CD8-positive, alpha-beta memory T cell (primary cell): ENCODE measurements at regions of chr18 and their contacts with region 1.

Region 1: DNA sequence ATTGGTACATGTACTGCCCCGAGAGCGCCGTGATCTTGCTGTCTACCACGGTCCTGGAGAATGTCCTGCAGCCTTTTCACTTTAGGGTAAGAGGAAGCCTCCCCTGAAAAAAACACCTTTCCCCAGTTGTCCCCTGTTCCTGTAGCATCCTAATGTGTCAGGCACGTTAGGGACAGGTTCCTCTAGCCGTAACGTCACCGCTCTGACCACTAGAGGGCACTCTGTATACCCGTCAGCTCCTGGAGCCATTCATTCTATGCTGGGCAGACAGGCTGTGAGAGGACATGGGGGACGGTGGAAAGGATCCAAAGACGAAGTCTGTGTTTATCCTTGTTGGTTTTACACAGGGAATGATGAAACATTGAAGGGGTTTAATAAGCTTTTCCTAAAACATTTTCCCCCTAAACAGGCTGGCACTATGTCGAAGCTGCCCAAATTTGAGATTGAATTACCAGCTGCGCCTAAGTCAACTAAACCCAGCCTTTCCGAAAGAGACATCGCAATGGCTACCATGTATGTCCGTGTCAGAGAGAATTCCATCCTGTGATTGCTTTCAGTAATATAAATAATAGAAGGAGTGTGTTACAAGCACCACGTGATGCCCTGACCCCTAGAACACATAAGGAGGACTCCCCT is 12.7 kb downstream of the RMC1 start:
- DNase-seq: peak; percentile 61 to 82 (median 67)
- H3K4me3 ChIP-seq: no peak overlapping the region
- H3K4me3 Mint-ChIP-seq: no peak overlapping the region
- H3K27ac ChIP-seq: peak overlapping the region; percentile 28
- H3K27ac Mint-ChIP-seq: peak overlapping the region; percentile 10 to 84 (median 65)
- H3K4me1 ChIP-seq: peaks cover 6% of the 10 kb centered on the region
- H3K4me1 Mint-ChIP-seq: peaks cover 10 to 24% (median 18%) of the 10 kb centered on the region in 3 donors
- H3K27me3 ChIP-seq: no peaks in the 10 kb centered on the region
- H3K27me3 Mint-ChIP-seq: peaks cover 0 to 1% of the 10 kb centered on the region in 2 donors

Region 2: DNA sequence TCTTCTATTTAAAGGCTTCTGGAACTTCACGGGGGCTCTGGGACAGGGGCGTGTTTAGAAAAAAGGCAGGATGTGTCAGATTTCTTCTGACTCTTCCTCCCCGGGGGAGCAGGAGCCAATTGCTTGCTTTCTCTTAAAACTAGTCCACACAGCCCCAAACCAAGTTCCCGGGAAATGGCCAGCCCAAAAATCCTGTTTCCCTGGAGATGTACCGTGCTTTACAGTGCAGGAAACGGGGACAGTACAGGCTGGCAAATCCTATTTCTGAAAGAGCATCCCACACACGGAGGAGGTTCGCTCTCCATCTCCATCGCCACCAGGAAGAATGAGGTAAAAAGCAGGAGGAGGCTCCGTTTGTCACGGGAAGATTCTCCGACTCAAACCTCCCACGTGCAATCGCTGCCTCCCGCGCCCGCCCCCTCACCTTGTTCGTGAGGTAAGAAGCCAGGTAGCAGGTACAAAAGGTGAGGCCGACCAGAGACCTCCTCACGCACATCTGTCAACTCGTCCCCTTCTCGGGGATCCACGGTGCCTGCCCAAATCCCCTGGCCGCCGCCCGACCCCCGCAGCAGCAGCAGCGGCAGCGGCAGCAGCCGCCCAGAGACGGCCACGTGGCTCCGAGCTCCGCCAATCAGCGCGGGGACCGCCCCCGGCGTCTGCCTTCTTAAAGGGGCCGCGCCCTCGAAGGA is 78.5 kb before region 1 on chr18:
- CTCF ChIA-PET with region 1: no interaction called
- POLR2A ChIA-PET with region 1: no interaction called
- DNase-seq: peak; percentile 68 to 81 (median 73)
- H3K4me3 ChIP-seq: peak overlapping the region; percentile 98
- H3K4me3 Mint-ChIP-seq: peak overlapping the region; percentile 85 to 92 (median 89)
- H3K27ac ChIP-seq: peak overlapping the region; percentile 51
- H3K27ac Mint-ChIP-seq: peak overlapping the region in 4 of 8 donors; percentile 68 to 80 (median 75)
- H3K4me1 ChIP-seq: peaks cover 8% of the 10 kb centered on the region
- H3K4me1 Mint-ChIP-seq: peaks cover 13 to 26% (median 21%) of the 10 kb centered on the region in 3 donors
- H3K27me3 ChIP-seq: no peaks in the 10 kb centered on the region
- H3K27me3 Mint-ChIP-seq: peaks cover 0 to 1% of the 10 kb centered on the region in 2 donors

Region 3: DNA sequence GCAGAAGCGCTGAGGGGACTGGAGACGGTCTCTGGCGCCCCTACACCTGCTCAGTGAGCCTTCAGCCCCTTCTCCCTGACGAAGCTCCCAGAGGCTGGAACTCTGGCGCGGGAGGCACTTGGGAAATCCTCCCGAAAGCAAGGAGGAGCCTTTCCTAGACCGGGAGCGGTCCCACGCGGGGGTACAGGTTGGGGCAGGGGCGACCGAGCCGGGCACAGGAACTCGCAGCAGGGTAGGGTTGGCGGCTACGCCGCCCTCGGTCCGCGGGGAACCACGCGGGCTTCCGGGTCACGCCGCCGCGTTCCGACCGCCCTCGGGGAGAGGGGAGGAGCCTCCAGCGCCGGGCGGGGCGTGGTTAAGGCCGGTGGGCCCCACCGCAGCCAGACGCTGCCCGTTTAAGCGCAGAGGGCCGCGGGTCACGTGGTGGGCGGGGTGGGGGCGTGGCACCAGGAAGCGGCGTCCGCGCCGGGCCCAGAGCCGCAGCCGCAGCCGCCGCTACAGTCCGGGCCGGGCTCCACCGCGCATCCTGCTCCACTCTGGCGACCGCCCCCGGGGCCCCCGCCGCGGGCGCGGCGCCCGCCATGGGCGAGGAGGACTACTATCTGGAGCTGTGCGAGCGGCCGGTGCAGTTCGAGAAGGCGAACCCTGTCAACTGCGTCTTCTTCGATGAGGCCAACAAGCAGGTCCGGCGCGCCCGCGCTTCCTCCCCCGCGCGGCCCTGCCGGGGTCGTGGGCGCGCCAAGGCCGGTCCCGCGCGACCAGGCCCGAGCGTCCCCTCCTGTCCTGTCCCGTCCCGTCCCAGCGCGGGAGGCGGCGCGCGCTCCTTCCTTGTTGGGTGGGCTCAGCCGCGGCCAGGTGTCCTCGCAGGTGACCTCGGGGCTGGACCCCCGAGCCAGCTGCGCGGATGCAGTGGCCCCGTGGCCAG is 12.7 kb before region 1 on chr18 and contains the start of gene RMC1:
- CTCF ChIA-PET with region 1: interaction called, 20 read pairs
- POLR2A ChIA-PET with region 1: no interaction called
- DNase-seq: peak; percentile 94 to 97 (median 97)
- H3K4me3 ChIP-seq: peak within 1 kb of the TSS; percentile 92
- H3K4me3 Mint-ChIP-seq: peak within 1 kb of the TSS; percentile 86 to 98 (median 97)
- H3K27ac ChIP-seq: peak within 1 kb of the TSS; percentile 85
- H3K27ac Mint-ChIP-seq: peak within 1 kb of the TSS; percentile 91 to 96 (median 94)
- H3K4me1 ChIP-seq: peaks cover 40% of the 10 kb centered on the region
- H3K4me1 Mint-ChIP-seq: peaks cover 53 to 66% (median 60%) of the 10 kb centered on the region in 3 donors
- H3K27me3 ChIP-seq: no peaks in the 10 kb centered on the region
- H3K27me3 Mint-ChIP-seq: no peaks in the 10 kb centered on the region
- total RNA-seq, gene RMC1: 45.5 to 47.7 TPM

Region 4: DNA sequence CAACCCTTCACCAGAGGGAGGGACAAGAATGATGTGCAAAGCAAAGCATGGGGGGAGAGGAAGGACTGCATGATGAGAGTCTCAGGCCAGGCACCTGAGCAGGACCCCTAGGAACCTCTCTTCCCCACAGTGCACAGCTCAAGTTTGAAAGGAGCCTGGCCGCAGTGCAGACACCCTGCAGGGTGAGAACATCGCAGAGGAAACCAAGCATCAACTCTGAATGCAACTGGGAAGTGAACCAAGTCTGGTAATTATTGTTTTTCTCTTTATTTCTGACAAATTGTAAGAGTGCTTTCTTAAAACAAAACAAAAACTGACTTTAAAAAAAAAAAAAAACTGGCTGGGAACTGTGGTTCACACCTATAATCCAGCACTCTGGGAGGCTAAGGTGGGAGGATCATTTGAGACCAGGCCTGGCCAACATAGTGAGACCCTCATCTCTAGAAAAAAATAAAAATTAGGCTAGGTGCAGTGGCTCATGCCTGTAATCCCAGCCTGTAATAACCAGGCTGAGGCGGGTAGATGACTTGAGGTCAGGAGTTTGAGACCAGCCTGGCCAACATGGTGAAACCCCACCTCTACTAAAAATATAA is 55.0 kb after region 1 on chr18:
- CTCF ChIA-PET with region 1: interaction called, 19 read pairs
- POLR2A ChIA-PET with region 1: no interaction called
- DNase-seq: peak in 2 of 5 donors; percentile 14 to 39
- H3K4me3 ChIP-seq: no peak overlapping the region
- H3K4me3 Mint-ChIP-seq: peak overlapping the region; percentile 14 to 81 (median 59)
- H3K27ac ChIP-seq: no peak overlapping the region
- H3K27ac Mint-ChIP-seq: peak overlapping the region; percentile 83 to 97 (median 89)
- H3K4me1 ChIP-seq: peaks cover 49% of the 10 kb centered on the region
- H3K4me1 Mint-ChIP-seq: peaks cover 52 to 69% (median 63%) of the 10 kb centered on the region in 3 donors
- H3K27me3 ChIP-seq: no peaks in the 10 kb centered on the region
- H3K27me3 Mint-ChIP-seq: no peaks in the 10 kb centered on the region

Region 5: DNA sequence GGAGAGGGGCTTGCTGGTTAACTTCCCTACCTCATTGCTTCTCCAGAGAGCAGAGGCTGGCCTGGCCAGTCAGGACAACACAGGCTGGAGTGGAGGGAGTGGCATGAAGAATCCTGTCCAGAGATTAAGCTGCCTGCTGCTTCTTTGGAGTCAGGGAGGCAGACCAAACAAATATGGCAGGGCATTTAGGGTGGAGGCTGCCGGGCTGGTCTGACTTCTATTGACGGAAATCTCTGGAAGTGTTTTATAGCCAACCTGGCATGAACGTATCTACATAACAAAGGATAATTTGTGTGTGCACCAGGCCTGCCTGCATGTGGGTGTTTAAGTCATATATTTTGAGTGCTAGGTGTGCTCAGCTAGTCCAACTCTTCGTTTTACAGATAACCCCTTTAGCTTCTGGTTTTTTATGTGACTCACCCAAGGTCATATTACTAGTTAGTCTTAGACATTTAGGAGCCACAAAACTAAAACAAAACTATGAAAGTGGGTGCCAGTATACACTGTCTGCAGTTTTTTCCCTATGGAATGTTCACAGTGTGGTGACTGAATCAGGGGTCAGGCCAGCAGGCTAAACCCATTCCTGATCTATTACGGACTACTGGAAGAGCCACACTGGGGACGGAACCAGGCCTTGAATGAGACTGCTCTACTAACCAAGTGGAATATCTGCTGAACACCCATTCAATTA is 64.8 kb after region 1 on chr18:
- CTCF ChIA-PET with region 1: interaction called, 50 read pairs
- POLR2A ChIA-PET with region 1: no interaction called
- DNase-seq: no peak
- H3K4me3 ChIP-seq: no peak overlapping the region
- H3K4me3 Mint-ChIP-seq: peak overlapping the region in 2 of 7 donors; percentile 61 to 67
- H3K27ac ChIP-seq: no peak overlapping the region
- H3K27ac Mint-ChIP-seq: peak overlapping the region in 5 of 8 donors; percentile 30 to 92 (median 84)
- H3K4me1 ChIP-seq: peaks cover 50% of the 10 kb centered on the region
- H3K4me1 Mint-ChIP-seq: peaks cover 69 to 83% (median 81%) of the 10 kb centered on the region in 3 donors
- H3K27me3 ChIP-seq: no peaks in the 10 kb centered on the region
- H3K27me3 Mint-ChIP-seq: no peaks in the 10 kb centered on the region

Region 6: DNA sequence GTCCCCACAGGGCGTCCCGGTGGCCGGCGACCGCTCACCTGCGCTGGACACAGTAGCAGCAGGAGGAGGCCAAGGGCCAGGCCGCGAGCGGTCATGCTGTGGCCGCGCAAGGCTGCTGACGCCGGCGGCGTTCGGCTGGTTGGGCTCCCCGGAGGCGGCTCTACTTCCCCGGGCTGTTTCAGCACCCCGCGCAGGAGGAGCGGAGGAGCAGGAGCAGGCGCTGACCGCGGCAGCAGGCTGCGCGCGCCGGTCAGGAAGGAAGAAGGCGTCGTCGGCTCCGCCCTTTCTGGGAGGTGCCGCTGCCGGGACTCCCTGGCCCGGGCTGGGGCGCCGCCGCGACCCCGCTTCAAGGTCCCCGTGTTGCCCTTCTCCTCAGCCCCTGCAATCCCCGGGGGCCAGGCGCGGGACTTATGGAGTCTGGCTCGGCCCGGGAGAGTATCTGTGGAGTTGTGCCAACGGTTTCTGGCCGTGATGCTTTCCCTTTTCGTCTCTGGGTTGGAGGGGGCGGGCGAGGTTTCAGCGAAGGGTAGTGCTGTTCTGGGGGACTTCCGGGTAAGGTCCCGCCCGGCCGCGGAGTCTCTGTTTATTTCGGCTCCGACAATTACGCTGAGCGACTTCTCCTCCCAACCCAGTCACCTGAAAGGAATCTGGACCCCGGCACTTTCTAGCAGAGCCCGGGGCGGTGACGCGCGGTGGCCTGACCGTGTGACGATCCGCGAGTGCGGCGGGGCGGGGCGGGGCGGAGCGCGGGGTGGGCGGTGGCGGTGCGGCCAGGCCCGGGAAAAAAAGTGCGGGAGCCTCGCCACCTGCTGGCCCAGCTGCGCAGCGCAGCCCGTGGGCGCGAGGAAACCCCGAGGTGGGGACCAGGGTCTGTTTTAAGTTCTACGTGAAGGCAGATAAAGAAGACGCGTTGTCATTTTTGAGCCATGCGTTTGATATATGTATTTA is 70.5 kb after region 1 on chr18 and contains the start of gene NPC1:
- CTCF ChIA-PET with region 1: interaction called, 50 read pairs
- POLR2A ChIA-PET with region 1: no interaction called
- DNase-seq: peak; percentile 90 to 94 (median 93)
- H3K4me3 ChIP-seq: peak within 1 kb of the TSS; percentile 87
- H3K4me3 Mint-ChIP-seq: peak within 1 kb of the TSS; percentile 94 to 100 (median 97)
- H3K27ac ChIP-seq: peak within 1 kb of the TSS; percentile 99
- H3K27ac Mint-ChIP-seq: peak within 1 kb of the TSS; percentile 93 to 98 (median 96)
- H3K4me1 ChIP-seq: peaks cover 40% of the 10 kb centered on the region
- H3K4me1 Mint-ChIP-seq: peaks cover 40 to 47% (median 46%) of the 10 kb centered on the region in 3 donors
- H3K27me3 ChIP-seq: no peaks in the 10 kb centered on the region
- H3K27me3 Mint-ChIP-seq: peaks cover 0 to 3% of the 10 kb centered on the region in 2 donors
- total RNA-seq, gene NPC1: 33.9 to 34.3 TPM